Aorta (tissue), 5 donors: ENCODE measurements at regions of chr18 and their contacts with region 1.

Region 1: GRCh38 chr18:34787931-34788532 is 77.9 kb downstream of the DTNA start:
- DNase-seq: no peak
- ATAC-seq: peak; percentile 78
- H3K4me3 ChIP-seq: no peak overlapping the region
- H3K27ac ChIP-seq: no peak overlapping the region
- H3K4me1 ChIP-seq: peaks cover 0 to 2% of the 10 kb centered on the region in 2 donors
- H3K27me3 ChIP-seq: no peaks in the 10 kb centered on the region

Region 2: DNA sequence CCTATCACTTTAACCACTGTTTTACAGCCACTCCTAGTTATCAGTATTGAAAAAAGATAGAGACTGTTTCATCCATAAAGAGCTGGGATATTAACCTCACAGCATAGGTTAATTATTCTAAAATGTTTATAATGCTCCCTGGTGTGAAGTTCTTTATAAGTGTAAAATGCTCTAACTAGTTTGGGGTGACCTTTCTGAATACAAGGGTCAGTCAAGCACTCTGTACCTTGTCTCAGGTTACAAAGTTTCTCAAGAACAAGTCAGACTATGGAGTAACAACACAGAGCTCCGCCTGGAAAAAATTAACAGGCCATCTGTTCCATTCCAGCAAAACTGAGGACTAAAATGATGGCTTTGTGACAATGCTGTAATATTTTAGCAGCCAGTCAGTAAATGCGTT is 670.7 kb before region 1 on chr18:
- intact Hi-C with region 1: loop called (anchors 5 kb)
- DNase-seq: no peak
- ATAC-seq: no peak
- H3K4me3 ChIP-seq: no peak overlapping the region
- H3K27ac ChIP-seq: no peak overlapping the region
- H3K4me1 ChIP-seq: no peaks in the 10 kb centered on the region
- H3K27me3 ChIP-seq: no peaks in the 10 kb centered on the region

Region 3: DNA sequence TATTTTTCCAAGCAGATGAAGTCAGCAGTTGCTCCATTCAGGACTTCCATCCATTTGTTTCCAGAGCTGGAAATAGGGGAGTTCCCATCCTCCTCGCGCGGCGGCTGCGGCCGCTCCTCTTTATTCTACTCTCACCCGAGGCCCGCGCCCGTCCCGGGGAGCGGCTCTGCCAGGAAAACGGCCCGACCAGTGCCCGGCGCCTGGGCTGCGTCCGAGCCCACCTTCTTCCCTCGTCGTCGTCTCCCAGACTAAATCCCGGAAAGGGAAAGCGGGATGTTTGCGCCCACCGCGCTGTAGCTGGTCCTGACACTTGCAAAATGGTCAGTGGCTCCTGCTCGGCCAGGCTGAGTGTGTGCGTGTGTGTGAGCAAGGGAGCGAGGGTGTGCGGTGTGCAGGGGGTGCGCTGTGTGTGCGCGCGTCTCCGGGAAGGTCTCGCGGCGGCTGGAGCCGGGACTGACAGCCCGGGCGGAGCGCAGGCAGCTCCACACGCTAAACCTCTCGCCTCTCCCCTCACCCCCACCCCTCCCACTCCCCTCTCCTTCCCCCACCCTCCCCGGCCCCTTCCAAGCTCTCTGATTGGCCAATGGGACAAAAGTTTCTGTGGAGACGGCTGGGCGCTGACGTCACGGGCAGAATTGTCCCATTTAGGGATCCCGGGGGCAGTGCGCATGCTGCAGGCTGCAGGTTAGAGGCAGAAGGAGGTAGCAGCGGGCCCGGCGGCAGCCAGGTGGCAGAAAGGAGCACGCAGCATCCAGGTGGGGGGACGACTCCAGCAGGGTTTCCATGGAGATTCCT is 563.4 kb before region 1 on chr18 and contains the start of gene NOL4:
- intact Hi-C with region 1: loop called in 1 of 2 experiments (anchors 10 kb)
- DNase-seq: peak; percentile 45 to 87
- ATAC-seq: peak; percentile 64
- H3K4me3 ChIP-seq: peak within 1 kb of the TSS; percentile 59 to 62
- H3K27ac ChIP-seq: no peak within 1 kb of the TSS
- H3K4me1 ChIP-seq: no peaks in the 10 kb centered on the region
- H3K27me3 ChIP-seq: no peaks in the 10 kb centered on the region
- total RNA-seq, gene NOL4: 0.62 TPM in 1 of 2 donors, not detected in the other

Region 4: GRCh38 chr18:34592961-34593382 is 195.1 kb before region 1 on chr18:
- intact Hi-C with region 1: loop called (anchors 5 kb)
- DNase-seq: peak; percentile 70 to 84
- ATAC-seq: peak; percentile 90
- H3K4me3 ChIP-seq: peak overlapping the region; percentile 43 to 89
- H3K27ac ChIP-seq: peak overlapping the region; percentile 77 to 87
- H3K4me1 ChIP-seq: peaks cover 0 to 8% of the 10 kb centered on the region in 2 donors
- H3K27me3 ChIP-seq: no peaks in the 10 kb centered on the region

Region 5: DNA sequence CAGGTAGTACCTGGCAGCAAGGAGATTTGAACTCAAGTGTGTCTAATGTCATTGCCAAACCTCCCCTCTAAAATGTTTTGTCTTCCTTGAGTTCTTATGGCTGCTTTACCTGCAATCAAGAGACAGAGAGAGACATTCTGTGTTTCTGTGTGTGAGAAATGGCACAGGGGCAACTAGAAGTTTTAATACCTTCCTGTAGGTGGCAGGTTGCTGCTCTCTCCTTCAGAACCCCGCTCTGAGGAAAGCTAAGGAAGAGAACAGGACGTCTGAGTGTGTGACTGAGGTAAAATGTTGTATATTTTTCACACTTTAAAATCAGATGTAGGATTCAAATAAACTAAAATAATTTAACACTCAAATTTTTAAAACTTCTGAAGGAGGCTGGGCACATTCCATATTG is 58.8 kb before region 1 on chr18:
- intact Hi-C with region 1: loop called in 1 of 2 experiments (anchors 5 kb)
- DNase-seq: no peak
- ATAC-seq: peak; percentile 64
- H3K4me3 ChIP-seq: no peak overlapping the region
- H3K27ac ChIP-seq: peak overlapping the region in 1 of 2 donors; percentile 10
- H3K4me1 ChIP-seq: peaks cover 8 to 16% of the 10 kb centered on the region in 2 donors
- H3K27me3 ChIP-seq: no peaks in the 10 kb centered on the region